Activated naive CD4-positive, alpha-beta T cell treated with anti-CD3 and anti-CD28 coated beads for 36 hours (primary cell): ENCODE measurements at regions of chr1 and their contacts with region 1.

Region 1: DNA sequence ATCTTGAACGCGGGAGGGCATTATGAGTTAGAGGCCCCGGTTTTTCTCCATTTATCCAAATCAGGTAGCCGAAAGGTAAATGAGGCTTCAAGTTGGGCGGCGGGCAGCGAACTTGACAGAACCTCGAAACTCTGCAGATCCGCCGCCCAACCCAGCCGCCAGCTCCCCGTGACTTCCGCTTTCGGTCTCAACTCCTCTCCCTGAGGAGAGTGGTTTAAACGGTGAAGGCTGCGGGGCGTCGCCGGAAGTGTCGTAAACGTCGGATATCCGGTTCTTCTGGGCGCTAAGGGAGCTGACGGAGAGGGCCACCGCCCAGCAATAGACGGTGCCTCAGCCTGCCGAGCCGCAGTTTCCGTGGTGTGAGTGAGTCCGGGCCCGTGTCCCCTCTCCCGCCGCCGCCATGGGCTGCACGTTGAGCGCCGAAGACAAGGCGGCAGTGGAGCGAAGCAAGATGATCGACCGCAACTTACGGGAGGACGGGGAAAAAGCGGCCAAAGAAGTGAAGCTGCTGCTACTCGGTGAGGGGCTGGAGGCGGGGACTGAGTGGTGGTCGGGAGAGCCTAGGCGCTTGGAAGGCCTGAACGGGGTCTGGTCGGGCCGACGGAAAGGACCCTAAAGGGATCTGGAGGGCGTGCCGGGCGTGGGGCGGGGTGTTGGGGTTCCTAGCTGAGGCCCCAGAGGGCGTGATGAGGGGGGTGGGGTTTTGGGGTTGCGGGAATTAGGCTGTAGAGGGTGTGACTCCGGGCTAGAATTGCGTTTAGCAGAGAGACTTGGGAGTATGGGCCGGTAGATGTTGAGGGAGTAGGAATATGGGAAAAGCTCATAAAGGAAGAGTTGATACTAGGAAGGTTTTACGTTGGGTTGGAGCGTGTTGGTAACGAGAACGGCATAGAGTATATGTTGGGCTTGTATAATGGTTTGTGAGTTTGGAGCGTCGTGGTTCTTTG is at the start of gene GNAI3:
- DNase-seq: peak; percentile 98
- H3K4me3 Mint-ChIP-seq: peak within 1 kb of the TSS; percentile 91
- H3K27ac Mint-ChIP-seq: peak within 1 kb of the TSS; percentile 88
- H3K4me1 Mint-ChIP-seq: peaks cover 41% of the 10 kb centered on the region
- H3K27me3 Mint-ChIP-seq: no peaks in the 10 kb centered on the region
- total RNA-seq, gene GNAI3: 8.0 to 8.5 TPM

Region 2: DNA sequence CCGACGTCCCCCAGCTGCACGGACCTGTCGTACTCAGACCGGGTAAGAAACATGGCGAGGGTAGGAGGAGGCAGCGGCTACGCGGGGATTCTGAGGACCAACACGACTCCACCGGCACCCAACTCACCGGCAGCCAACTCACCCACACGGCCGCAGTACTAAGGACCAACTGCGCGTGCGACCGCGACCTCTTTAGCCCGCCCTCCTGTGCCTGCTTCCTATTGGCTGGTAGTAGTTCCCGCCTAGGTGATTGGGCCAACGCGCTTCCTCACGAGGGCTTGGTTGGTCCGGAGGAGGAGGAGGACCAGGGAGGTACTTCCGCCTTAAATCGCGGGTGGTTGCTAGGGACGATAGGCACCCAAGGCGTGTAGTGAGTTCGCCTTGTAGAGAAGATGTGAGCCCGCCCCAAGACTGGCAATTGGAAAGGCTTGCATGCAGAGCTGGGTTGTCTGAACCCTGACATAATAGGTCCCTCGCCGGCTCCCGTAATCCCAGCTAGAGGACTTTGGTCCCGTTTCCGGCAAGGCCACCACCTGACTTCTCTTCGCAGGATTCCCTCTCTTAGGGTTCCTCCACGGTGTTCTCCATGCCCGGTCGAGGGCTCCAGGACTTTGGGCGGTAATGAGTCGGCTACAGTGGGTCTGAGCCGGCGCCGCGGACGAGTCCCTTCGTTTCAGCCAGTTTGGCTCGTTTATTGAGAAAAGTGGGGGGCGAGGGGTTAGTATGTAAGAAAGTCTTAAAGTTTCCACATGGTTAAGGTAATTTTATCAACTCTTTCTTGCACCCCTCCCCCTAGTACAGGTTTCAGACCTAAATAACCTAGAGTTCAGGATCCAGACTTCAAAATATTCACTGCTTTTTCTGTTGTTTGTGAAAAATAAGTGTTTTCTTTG is 122.1 kb before region 1 on chr1 and contains the start of gene PSMA5:
- CTCF ChIA-PET with region 1: interaction called, 3 read pairs
- intact Hi-C with region 1: loop called (anchors 1 kb)
- DNase-seq: peak; percentile 98
- H3K4me3 Mint-ChIP-seq: peak within 1 kb of the TSS; percentile 94
- H3K27ac Mint-ChIP-seq: peak within 1 kb of the TSS; percentile 97
- H3K4me1 Mint-ChIP-seq: peaks cover 33% of the 10 kb centered on the region
- H3K27me3 Mint-ChIP-seq: no peaks in the 10 kb centered on the region
- total RNA-seq, gene PSMA5: 181 to 202 TPM

Region 3: GRCh38 chr1:109532365-109533136 is 16.0 kb before region 1 on chr1:
- CTCF ChIA-PET with region 1: interaction called, 22 read pairs
- intact Hi-C with region 1: no loop called
- DNase-seq: peak; percentile 96
- H3K4me3 Mint-ChIP-seq: peak overlapping the region; percentile 57
- H3K27ac Mint-ChIP-seq: peak overlapping the region; percentile 81
- H3K4me1 Mint-ChIP-seq: peaks cover 22% of the 10 kb centered on the region
- H3K27me3 Mint-ChIP-seq: no peaks in the 10 kb centered on the region

Region 4: GRCh38 chr1:109630081-109630897 is 81.7 kb after region 1 on chr1:
- CTCF ChIA-PET with region 1: interaction called, 48 read pairs
- intact Hi-C with region 1: loop called (anchors 1 kb)
- DNase-seq: peak; percentile 58
- H3K4me3 Mint-ChIP-seq: no peak overlapping the region
- H3K27ac Mint-ChIP-seq: no peak overlapping the region
- H3K4me1 Mint-ChIP-seq: peaks cover 11% of the 10 kb centered on the region
- H3K27me3 Mint-ChIP-seq: no peaks in the 10 kb centered on the region

Region 5: GRCh38 chr1:109739738-109740660 is 191.4 kb after region 1 on chr1:
- CTCF ChIA-PET with region 1: no interaction called
- intact Hi-C with region 1: loop called (anchors 1 kb)
- DNase-seq: peak; percentile 75
- H3K4me3 Mint-ChIP-seq: peak overlapping the region; percentile 63
- H3K27ac Mint-ChIP-seq: no peak overlapping the region
- H3K4me1 Mint-ChIP-seq: peaks cover 8% of the 10 kb centered on the region
- H3K27me3 Mint-ChIP-seq: peaks cover 12% of the 10 kb centered on the region

Region 6: DNA sequence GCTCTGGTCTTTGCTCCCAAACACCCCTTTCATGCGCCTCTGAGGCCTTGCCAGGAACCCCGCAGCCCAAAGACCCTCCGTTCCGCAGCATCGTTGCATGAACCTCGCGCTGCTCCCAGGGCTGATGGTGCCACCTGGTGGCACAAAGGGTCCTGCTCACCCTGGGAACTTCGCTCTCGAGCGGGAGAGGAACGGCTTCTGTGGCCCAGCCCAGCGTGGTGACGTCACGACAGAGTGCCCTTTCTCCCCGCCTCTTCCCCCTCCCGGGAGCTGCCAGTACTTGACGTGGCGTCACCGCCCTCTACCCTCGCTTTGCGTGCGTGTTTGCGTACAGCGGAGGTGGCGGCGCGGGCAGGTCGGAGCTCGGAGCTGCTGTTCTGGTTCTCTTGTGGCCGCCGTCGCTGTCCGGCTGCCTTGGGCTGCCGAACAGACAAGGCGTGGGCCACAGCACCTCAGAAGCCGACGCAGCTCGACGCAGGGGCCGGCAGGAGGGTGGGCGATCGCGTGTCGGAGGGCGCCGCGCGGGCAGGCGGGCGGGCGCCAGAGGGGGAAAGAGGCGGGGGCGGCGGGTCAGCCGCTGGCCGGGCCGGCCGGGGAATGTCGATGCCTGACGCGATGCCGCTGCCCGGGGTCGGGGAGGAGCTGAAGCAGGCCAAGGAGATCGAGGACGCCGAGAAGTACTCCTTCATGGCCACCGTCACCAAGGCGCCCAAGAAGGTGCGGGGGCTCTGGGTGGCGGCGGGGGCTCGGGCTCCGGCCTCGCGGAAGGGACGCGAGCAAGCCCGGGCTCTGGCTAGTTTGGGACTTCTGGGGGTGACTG is 436.1 kb after region 1 on chr1 and contains the start of gene AHCYL1:
- CTCF ChIA-PET with region 1: interaction called, 15 read pairs
- intact Hi-C with region 1: loop called (anchors 1 kb)
- DNase-seq: peak; percentile 100
- H3K4me3 Mint-ChIP-seq: peak within 1 kb of the TSS; percentile 97
- H3K27ac Mint-ChIP-seq: peak within 1 kb of the TSS; percentile 92
- H3K4me1 Mint-ChIP-seq: peaks cover 28% of the 10 kb centered on the region
- H3K27me3 Mint-ChIP-seq: no peaks in the 10 kb centered on the region
- total RNA-seq, gene AHCYL1: 70.0 to 75.1 TPM